ENCODE measurements at regions of chrX and their contacts with region 1.

Region 1: DNA sequence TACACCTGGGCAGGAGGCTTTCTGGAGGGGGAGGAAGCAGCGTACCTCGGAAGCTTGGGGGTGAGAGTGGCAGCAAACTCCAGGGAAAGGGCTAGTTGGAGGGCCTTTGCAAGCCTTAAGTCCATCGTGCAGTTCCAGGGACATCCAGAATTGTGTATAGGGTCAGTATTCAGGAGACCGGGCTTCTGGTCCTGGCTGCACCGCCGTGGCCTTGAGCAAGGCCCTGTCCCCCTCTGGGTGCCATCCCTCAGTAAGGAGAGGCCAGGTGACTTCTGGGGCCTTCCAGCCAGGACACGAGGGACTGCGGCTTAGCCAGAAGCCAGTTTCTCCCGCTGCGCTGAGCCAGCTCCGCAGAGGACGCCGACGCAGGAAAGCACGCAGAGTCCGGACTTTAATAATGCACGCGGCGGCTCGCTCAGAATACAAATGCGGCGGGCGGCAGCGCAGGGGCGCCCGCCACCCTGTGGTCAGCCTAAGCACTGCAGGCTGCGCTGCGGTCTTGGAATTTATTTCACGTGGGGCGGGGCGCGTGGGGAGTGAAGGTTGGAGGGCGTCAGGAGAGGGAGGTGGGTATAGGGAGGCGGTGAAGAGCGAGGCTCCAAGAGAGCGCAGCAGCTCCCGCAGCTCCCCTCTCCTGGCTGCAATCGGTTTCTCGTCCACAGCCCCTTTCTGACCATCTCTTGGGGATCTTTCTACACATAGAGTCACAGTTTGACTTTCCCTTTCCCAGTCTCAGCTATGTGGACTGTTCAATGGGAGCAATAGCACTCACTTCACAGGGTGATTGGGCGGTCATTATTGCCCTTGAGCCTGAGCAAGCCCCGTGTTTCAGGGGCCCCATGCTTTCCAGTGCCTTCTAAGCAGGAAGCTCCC is 94.1 kb upstream of the GPR50 start:
- DNase-seq: peak; percentile 62
- H3K4me3 Mint-ChIP-seq: no peak overlapping the region
- H3K27ac Mint-ChIP-seq: no peak overlapping the region
- H3K4me1 Mint-ChIP-seq: peaks cover 3% of the 10 kb centered on the region
- H3K27me3 Mint-ChIP-seq: peaks cover 36% of the 10 kb centered on the region

Region 2: DNA sequence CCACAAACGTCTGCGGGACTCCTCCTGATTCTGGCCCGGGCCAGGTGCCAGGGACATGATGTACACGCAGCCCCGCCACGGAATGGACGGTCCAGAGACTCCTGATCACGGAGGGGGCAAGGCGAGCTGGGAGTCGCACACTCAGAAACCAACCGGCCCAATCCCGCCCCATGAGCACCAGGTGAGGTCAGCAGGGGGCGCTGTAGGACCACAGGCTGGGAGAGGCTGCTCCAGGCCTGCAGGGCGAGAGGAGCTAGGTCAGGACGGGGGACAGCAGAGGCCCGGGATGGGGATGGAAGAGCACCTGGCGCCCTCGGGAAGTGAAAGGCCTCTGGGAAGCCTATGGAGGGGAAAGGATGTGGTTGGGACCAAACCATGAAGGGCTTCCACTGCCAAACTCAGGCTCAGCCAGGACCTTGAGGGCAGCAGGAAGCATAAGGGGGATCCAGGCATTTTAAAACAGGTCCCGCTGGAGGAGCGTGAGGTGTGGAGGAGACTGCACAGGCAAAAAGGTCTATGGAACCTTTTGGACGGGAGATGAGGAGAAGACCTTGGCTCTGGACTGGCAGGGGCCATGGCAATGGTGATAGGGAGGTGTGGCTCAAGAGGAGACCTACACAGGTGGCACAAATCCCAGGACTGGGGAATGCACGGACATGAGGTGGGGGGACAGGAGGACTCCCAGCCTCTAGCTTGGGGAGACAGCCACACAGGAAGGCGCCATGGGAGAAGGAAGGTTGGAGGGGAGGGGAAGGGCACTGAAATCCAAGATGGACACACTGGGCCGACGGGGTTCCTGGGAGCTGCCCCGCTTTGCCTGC is 310.0 kb before region 1 on chrX:
- CTCF ChIA-PET with region 1: interaction called, 112 read pairs
- DNase-seq: peak; percentile 82
- H3K4me3 Mint-ChIP-seq: no peak overlapping the region
- H3K27ac Mint-ChIP-seq: no peak overlapping the region
- H3K4me1 Mint-ChIP-seq: no peaks in the 10 kb centered on the region
- H3K27me3 Mint-ChIP-seq: no peaks in the 10 kb centered on the region